Stomach (tissue), 19 donors: ENCODE measurements at regions of chr6 and their contacts with region 1.

Region 1: DNA sequence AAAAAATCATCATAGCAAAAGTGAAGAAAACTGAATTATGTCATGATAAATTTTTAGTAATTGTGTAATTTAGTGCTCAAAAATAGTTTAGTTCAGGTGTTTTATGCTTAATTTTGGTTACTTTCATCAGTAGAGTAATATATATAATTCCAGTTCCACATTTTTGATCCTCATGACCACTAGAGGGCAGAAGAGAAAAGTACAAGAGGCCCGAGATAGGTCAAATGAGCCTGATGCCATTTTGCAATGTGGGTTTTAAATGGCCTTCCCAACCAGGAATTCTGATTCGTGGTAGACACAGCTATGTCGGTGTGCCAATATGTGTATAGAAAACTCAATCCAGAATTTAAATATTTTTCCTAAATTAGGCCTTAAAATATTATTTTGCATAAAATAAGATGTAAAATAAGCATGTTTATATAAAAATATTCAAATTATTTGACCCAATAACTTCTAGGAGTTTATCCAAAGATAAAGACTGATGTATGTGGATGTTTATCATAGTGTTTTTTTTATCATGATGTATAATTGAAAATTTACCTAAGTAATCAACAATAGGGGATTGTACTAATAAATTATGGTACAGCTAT is 159.7 kb upstream of the RPS6KA2 start:
- DNase-seq: peak in 1 of 2 donors; percentile 83
- H3K4me3 ChIP-seq: no peak overlapping the region
- H3K27ac ChIP-seq: no peak overlapping the region
- H3K4me1 ChIP-seq: no peaks in the 10 kb centered on the region
- H3K27me3 ChIP-seq: no peaks in the 10 kb centered on the region
- CTCF ChIP-seq: peak in 4 of 7 experiments; percentile 42 to 73 (median 68)
- EP300 ChIP-seq: no peak
- POLR2A ChIP-seq: no peak

Region 2: GRCh38 chr6:166736634-166737033 is 50.2 kb before region 1 on chr6:
- intact Hi-C with region 1: no loop called
- DNase-seq: no peak
- H3K4me3 ChIP-seq: no peak overlapping the region
- H3K27ac ChIP-seq: no peak overlapping the region
- H3K4me1 ChIP-seq: peaks cover 0 to 28% (median 9%) of the 10 kb centered on the region in 4 donors
- H3K27me3 ChIP-seq: no peaks in the 10 kb centered on the region
- CTCF ChIP-seq: no peak
- EP300 ChIP-seq: no peak
- POLR2A ChIP-seq: no peak

Region 3: DNA sequence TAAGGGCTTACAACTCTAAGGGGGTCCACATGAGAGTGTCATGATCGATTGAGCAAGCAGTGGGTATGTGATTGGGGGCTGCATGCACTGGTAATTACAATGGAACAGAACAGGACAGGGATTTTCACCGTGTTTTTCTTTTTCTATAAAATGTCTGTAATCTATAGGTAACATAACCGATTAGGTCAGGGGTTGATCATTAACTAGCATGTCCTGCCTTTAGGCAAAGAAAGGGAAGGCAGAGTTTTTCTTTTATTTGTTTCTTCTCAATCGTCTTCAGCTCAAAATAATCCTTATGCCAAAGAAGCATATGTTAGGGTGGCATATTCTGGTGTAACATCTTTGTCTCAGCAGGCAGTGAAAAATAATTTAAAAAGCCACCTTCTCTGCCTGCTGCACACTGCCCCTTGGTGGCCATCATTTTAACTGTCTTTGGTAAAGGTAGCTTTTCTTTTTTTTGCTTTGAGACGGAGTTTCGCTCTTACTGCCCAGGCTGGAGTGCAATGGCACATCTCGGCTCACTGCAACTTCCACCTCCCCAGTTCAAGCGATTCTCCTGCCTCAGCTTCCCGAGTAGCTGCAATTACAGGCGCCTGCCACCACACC is 202.7 kb after region 1 on chr6:
- intact Hi-C with region 1: loop called (anchors 5 kb)
- DNase-seq: peak in 1 of 2 donors; percentile 74
- H3K4me3 ChIP-seq: no peak overlapping the region
- H3K27ac ChIP-seq: no peak overlapping the region
- H3K4me1 ChIP-seq: peaks cover 0 to 12% (median 9%) of the 10 kb centered on the region in 4 donors
- H3K27me3 ChIP-seq: no peaks in the 10 kb centered on the region
- CTCF ChIP-seq: peak in 5 of 7 experiments; percentile 8 to 49 (median 27)
- EP300 ChIP-seq: no peak
- POLR2A ChIP-seq: no peak